ENCODE measurements at regions of chr17 and their contacts with region 1.

Region 1: GRCh38 chr17:68457539-68458259 is 403 bp upstream of the WIPI1 start:
- DNase-seq: peak; percentile 98 to 100 (median 99)
- H3K4me3 ChIP-seq: peak overlapping the region; percentile 59 to 96 (median 85)
- H3K27ac ChIP-seq: peak overlapping the region in 54 of 59 donors; percentile 18 to 97 (median 79)
- H3K27me3 ChIP-seq: no peaks in the 10 kb centered on the region
- CTCF ChIP-seq: peak in 22 of 56 donors; percentile 5 to 49 (median 22)

Region 2: DNA sequence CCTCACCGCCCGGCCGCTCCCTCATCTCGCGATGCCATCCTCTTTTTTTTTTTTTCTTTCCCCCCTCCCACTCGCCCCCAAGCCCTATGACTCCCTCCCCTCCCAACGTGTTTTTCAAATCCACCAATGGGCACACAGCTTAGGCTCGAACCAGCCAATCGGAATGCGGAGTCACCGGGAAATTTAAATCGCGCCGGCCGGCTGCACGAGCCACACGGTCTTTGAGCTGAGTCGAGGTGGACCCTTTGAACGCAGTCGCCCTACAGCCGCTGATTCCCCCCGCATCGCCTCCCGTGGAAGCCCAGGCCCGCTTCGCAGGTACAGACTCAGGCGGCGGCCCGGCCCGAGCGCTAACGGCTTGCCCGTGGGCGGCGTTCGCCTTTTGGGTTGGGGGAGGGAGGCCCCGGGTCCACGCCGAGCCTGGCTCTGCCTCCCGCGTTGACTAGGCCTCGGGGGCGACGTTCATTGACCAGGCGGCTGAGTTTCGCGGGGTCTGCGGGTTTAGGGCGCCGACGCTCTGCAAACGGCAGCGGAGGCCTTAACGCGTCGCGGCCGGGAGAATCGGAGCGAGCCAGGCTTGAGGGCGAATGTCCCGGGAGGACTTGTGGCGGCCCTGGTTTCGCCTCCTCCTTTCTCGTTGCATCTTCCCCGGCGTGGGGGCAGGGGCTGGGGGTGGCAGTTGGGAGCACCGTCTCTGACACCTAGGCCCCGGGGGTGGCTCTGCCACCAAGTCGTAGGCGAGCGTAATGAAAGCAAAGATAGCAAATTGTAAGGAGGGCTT is 422.0 kb before region 1 on chr17 and contains the start of gene KPNA2:
- intact Hi-C with region 1: loop called (anchors 10 kb)
- DNase-seq: peak; percentile 76 to 94 (median 90)
- H3K4me3 ChIP-seq: peak within 1 kb of the TSS; percentile 50 to 100 (median 96)
- H3K27ac ChIP-seq: peak within 1 kb of the TSS; percentile 29 to 93 (median 80)
- H3K27me3 ChIP-seq: no peaks in the 10 kb centered on the region
- CTCF ChIP-seq: peak in 21 of 56 donors; percentile 1 to 44 (median 16)
- total RNA-seq, gene KPNA2: 17.2 to 55.8 (median 35.5) TPM

Region 3: GRCh38 chr17:68205251-68205807 is 252.4 kb before region 1 on chr17:
- intact Hi-C with region 1: loop called in 1 of 2 experiments (anchors 5 kb)
- DNase-seq: peak; percentile 87 to 96 (median 94)
- H3K4me3 ChIP-seq: peak overlapping the region; percentile 48 to 91 (median 75)
- H3K27ac ChIP-seq: peak overlapping the region in 58 of 59 donors; percentile 55 to 96 (median 91)
- H3K27me3 ChIP-seq: peaks cover 0 to 8% (median 0%) of the 10 kb centered on the region in 45 donors
- CTCF ChIP-seq: peak; percentile 71 to 98 (median 90)

Region 4: DNA sequence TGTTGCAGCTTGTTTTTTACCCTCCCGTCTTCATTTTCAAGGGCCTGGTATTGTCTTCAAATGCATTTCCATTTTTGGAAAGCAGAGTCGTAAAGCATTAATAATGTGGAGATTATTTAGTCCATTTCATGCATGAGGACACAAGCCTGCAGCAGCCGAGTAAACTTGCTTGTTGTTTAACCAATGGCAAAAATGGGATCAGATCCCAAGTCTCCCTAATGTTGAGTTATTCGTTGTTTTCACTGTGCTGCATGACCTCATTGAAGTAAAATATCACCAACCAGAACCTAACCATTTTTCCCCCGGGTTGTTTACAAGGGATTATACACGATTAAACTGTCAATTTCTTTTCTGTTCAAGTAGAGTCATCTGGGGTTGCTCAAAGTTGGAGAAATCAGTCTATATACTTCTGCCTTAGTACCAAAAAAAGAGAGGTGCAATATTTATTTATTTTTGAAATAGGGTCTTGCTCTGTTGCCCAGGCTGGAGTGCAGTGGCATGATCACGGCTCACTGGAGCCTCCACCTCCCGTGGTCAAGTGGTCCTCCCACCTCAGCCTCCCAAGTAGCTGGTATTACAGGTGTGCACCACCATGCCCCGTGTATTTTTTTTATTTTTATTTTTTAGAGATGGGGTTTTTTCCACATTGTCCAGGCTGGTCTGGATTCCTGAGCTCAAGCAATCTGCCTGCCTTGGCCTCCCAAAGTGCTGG is 197.5 kb before region 1 on chr17:
- intact Hi-C with region 1: loop called (anchors 2 to 5 kb)
- DNase-seq: peak in 1 of 10 donors; percentile 18
- H3K4me3 ChIP-seq: no peak overlapping the region
- H3K27ac ChIP-seq: peak overlapping the region in 12 of 59 donors; percentile 2 to 81 (median 54)
- H3K27me3 ChIP-seq: no peaks in the 10 kb centered on the region
- CTCF ChIP-seq: no peak

Region 5: GRCh38 chr17:68356520-68356919 is 101.2 kb before region 1 on chr17:
- intact Hi-C with region 1: no loop called
- DNase-seq: no peak
- H3K4me3 ChIP-seq: no peak overlapping the region
- H3K27ac ChIP-seq: no peak overlapping the region
- H3K27me3 ChIP-seq: no peaks in the 10 kb centered on the region
- CTCF ChIP-seq: no peak

Region 6: GRCh38 chr17:68576811-68577496 is 119.3 kb after region 1 on chr17:
- intact Hi-C with region 1: no loop called
- DNase-seq: no peak
- H3K4me3 ChIP-seq: no peak overlapping the region
- H3K27ac ChIP-seq: peak overlapping the region in 3 of 59 donors; percentile 0 to 46 (median 6)
- H3K27me3 ChIP-seq: no peaks in the 10 kb centered on the region
- CTCF ChIP-seq: no peak

Region 7: GRCh38 chr17:68759343-68760132 is 301.8 kb after region 1 on chr17:
- intact Hi-C with region 1: loop called in 1 of 2 experiments (anchors 5 kb)
- DNase-seq: peak; percentile 45 to 95 (median 87)
- H3K4me3 ChIP-seq: peak overlapping the region in 54 of 59 donors; percentile 4 to 64 (median 38)
- H3K27ac ChIP-seq: peak overlapping the region in 55 of 59 donors; percentile 3 to 88 (median 66)
- H3K27me3 ChIP-seq: no peaks in the 10 kb centered on the region
- CTCF ChIP-seq: peak; percentile 69 to 98 (median 89)